GM10248 (cell line): ENCODE measurements at regions of chr4 and their contacts with region 1.

Region 1: GRCh38 chr4:113031212-113031611 is 18.2 kb upstream of the ANK2 start:
- DNase-seq: no peak
- CTCF ChIP-seq: no peak

Region 2: DNA sequence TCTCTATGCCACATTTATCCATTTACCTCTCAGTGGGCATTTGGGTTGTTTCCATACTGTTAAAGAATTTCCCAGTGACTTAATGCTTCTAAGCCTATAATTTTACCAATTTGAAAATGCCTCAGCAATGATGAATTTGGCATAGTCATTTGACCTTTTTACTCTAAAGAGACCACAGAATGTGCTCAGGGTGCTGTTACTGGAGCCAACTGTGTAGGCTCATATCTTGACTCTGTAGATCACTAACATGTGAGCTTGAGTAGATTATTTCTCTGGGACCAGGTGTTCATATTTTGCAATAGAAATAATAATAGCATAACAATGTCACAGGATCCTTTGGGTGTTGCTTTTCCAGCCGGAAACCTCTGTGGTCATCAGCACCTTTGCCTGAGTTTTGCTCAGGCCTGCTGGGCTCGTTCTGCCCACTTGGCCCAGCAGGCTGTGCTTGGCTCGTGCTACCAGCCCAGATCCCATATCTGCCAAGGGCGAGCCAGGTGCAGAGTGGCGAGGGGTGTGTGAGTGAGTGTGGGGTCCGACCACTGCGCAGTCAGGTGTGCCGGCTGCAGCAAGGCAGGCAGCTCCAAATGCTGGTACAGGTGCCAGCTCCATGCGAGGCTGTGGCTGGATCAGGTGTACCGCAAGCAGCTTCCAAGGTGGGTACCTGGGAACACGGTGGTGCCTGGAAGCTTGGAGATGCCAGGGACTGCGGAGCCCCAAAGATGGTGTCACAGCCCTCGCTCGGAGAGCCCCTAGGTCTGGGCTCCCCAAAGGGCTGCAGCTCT is 52.3 kb before region 1 on chr4:
- CTCF ChIA-PET with region 1: no interaction called
- POLR2A ChIA-PET with region 1: no interaction called
- DNase-seq: no peak
- CTCF ChIP-seq: no peak

Region 3: GRCh38 chr4:113043591-113043990 is 12.4 kb after region 1 on chr4:
- CTCF ChIA-PET with region 1: interaction called, 10 read pairs
- POLR2A ChIA-PET with region 1: no interaction called
- DNase-seq: no peak
- CTCF ChIP-seq: no peak